ENCODE measurements at regions of chr7 and their contacts with region 1.

Region 1: GRCh38 chr7:120950539-120951308 is at the start of gene ING3:
- DNase-seq: peak; percentile 97
- H3K4me3 Mint-ChIP-seq: peak within 1 kb of the TSS; percentile 91
- H3K27ac Mint-ChIP-seq: peak within 1 kb of the TSS; percentile 97
- H3K4me1 Mint-ChIP-seq: peaks cover 24% of the 10 kb centered on the region
- H3K27me3 Mint-ChIP-seq: peaks cover 4% of the 10 kb centered on the region
- total RNA-seq, gene ING3: 22.6 and 22.9 TPM in 2 replicates

Region 2: GRCh38 chr7:120857588-120858573 is 92.8 kb before region 1 on chr7 and contains the start of gene TSPAN12:
- intact Hi-C with region 1: loop called (anchors 5 kb)
- DNase-seq: peak; percentile 40
- H3K4me3 Mint-ChIP-seq: peak within 1 kb of the TSS; percentile 83
- H3K27ac Mint-ChIP-seq: no peak within 1 kb of the TSS
- H3K4me1 Mint-ChIP-seq: peaks cover 10% of the 10 kb centered on the region
- H3K27me3 Mint-ChIP-seq: peaks cover 64% of the 10 kb centered on the region
- total RNA-seq, gene TSPAN12: not detected in 2 replicates

Region 3: DNA sequence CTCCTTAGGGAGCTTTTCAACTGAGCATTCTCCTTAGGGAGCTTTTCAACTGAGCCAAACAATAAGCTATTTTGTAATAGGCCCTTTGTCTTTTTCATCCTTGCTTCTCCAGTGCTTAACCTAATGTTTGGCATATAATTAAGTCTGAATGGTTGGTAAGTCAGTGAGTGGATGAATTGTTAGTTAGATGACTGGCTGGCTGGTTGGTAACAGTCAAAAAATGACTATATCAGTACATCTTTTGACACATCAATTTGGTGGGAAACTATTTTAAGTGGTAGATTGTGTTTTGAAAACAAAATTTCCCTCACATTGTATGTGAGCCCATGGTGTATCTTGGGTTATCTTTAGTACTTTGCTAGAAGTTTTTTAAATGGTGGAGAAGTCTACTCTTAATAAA is 16.2 kb after region 1 on chr7:
- intact Hi-C with region 1: loop called (anchors 2 kb)
- DNase-seq: no peak
- H3K4me3 Mint-ChIP-seq: no peak overlapping the region
- H3K27ac Mint-ChIP-seq: peak overlapping the region; percentile 33
- H3K4me1 Mint-ChIP-seq: peaks cover 6% of the 10 kb centered on the region
- H3K27me3 Mint-ChIP-seq: no peaks in the 10 kb centered on the region

Region 4: GRCh38 chr7:120981888-120982615 is 31.3 kb after region 1 on chr7:
- intact Hi-C with region 1: loop called (anchors 1 kb)
- DNase-seq: no peak
- H3K4me3 Mint-ChIP-seq: no peak overlapping the region
- H3K27ac Mint-ChIP-seq: peak overlapping the region; percentile 86
- H3K4me1 Mint-ChIP-seq: peaks cover 26% of the 10 kb centered on the region
- H3K27me3 Mint-ChIP-seq: no peaks in the 10 kb centered on the region

Region 5: GRCh38 chr7:121081327-121081936 is 130.7 kb after region 1 on chr7:
- intact Hi-C with region 1: loop called (anchors 1 kb)
- DNase-seq: no peak
- H3K4me3 Mint-ChIP-seq: no peak overlapping the region
- H3K27ac Mint-ChIP-seq: no peak overlapping the region
- H3K4me1 Mint-ChIP-seq: peaks cover 3% of the 10 kb centered on the region
- H3K27me3 Mint-ChIP-seq: peaks cover 28% of the 10 kb centered on the region

Region 6: GRCh38 chr7:121204537-121204936 is 253.8 kb after region 1 on chr7:
- intact Hi-C with region 1: no loop called
- DNase-seq: no peak
- H3K4me3 Mint-ChIP-seq: no peak overlapping the region
- H3K27ac Mint-ChIP-seq: no peak overlapping the region
- H3K4me1 Mint-ChIP-seq: no peaks in the 10 kb centered on the region
- H3K27me3 Mint-ChIP-seq: peaks cover 3% of the 10 kb centered on the region